ENCODE measurements at regions of chr1 and their contacts with region 1.

Region 1: DNA sequence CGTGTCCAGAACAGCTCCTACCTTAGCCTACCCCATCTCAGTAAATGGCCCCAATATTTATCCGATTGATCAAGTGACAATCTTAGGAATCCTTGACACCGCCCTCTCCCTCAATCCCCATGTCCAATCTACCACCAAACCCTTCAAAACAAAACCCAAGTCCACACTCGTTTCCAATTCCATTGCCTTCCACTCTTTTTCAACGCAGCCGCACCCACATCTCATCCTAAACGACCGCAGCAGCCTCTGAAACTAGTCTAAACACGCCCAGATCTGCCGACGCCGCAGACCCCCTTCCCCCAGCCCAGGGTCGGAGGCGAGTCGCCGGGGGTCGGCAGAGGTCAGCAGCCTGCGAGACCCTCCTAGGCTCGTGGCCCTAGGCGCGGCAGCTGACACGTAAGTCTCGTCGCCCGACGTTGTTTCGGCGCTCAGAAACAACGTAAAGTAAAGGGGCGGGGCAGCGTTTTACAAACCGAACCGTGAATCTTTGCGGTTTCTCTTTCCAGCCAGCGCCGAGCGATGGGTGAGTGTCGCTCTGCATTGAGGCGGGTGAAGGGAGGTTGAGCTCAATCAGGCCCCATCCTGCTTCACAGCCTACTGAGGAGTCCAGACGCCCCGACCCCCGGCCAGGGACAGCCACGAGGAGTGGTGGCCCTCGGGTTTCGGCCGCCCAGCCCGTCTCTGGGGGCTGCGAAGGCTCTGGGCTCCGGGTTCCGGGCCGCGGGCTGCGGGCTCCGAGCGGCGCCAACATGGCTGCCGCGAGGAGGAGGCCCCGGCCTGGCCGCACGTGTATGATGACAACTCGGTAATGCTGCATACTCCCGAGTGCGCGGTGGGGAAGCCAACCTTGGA is at the start of gene RPS8:
- DNase-seq: peak; percentile 85 to 99 (median 89)
- ATAC-seq: peak; percentile 81
- H3K4me3 ChIP-seq: peak within 1 kb of the TSS; percentile 75
- H3K27ac ChIP-seq: peak within 1 kb of the TSS; percentile 98
- H3K4me1 ChIP-seq: peaks cover 13 to 22% of the 10 kb centered on the region in 2 experiments
- H3K27me3 ChIP-seq: no peaks in the 10 kb centered on the region
- CTCF ChIP-seq: 0 out of 6 replicates have a peak, but pooled peaks of 1 of the 3 experiments have one; percentile 2
- EP300 ChIP-seq: peak; percentile 44; the same call in 1 of the 2 replicates
- POLR2A ChIP-seq: peak; percentile 100
- RAD21 ChIP-seq: no peak
- polyA plus RNA-seq, gene RPS8: 2,431 to 2,562 TPM

Region 2: DNA sequence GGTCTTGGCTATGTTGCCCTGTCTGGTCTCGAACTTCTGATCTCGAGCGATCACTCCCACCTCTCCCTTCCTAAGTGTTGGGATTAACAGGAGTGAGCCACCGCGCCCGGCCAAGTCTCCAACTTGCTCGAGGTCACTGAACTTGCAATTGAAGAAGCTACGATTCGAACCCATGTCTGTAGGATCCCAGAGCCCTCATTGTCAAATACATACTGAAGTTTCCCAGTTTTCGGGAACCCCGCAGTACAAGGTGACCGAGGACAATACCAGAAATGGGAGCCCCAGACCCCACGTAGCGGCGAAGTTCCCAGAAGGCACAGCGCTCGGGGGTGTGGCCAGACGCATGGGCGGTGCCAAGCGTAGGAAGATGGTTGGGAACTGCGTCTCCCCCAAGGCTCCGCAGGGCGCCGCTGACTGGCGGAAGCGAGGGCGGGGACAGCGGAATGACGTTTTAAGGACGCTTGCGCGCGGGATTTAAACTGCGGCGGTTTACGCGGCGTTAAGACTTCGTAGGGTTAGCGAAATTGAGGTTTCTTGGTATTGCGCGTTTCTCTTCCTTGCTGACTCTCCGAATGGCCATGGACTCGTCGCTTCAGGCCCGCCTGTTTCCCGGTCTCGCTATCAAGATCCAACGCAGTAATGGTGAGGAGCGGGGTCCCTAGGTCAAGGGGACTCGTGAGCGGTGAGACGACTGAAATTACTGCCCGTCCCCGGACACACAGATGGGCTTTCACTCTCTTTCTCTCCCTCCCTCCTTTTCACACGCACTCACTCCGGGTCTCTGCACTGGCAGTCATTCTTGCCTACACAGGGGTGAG is 35.7 kb before region 1 on chr1 and contains the start of gene KIF2C:
- CTCF ChIA-PET with region 1: no interaction called
- POLR2A ChIA-PET with region 1: interaction called, 26 read pairs
- in situ Hi-C with region 1: no loop called
- intact Hi-C with region 1: loop called (anchors 2 kb)
- DNase-seq: peak; percentile 97 to 100 (median 98)
- ATAC-seq: peak; percentile 98
- H3K4me3 ChIP-seq: peak within 1 kb of the TSS; percentile 68
- H3K27ac ChIP-seq: peak within 1 kb of the TSS; percentile 95
- H3K4me1 ChIP-seq: peaks cover 13 to 22% of the 10 kb centered on the region in 2 experiments; a peak in 4 of 5 replicates
- H3K27me3 ChIP-seq: no peaks in the 10 kb centered on the region
- CTCF ChIP-seq: peak in 2 of 3 experiments; percentile 15 to 25; a peak in 3 of 6 replicates
- EP300 ChIP-seq: peak; percentile 54
- POLR2A ChIP-seq: peak; percentile 98
- RAD21 ChIP-seq: no peak
- polyA plus RNA-seq, gene KIF2C: 84.9 to 161 TPM

Region 3: GRCh38 chr1:44757420-44757819 is 17.9 kb before region 1 on chr1:
- CTCF ChIA-PET with region 1: no interaction called
- POLR2A ChIA-PET with region 1: interaction called, 112 read pairs
- in situ Hi-C with region 1: no loop called
- intact Hi-C with region 1: no loop called
- DNase-seq: no peak
- ATAC-seq: no peak
- H3K4me3 ChIP-seq: no peak overlapping the region
- H3K27ac ChIP-seq: no peak overlapping the region
- H3K4me1 ChIP-seq: no peaks in the 10 kb centered on the region
- H3K27me3 ChIP-seq: no peaks in the 10 kb centered on the region
- CTCF ChIP-seq: no peak
- EP300 ChIP-seq: no peak
- POLR2A ChIP-seq: no peak
- RAD21 ChIP-seq: no peak

Region 4: DNA sequence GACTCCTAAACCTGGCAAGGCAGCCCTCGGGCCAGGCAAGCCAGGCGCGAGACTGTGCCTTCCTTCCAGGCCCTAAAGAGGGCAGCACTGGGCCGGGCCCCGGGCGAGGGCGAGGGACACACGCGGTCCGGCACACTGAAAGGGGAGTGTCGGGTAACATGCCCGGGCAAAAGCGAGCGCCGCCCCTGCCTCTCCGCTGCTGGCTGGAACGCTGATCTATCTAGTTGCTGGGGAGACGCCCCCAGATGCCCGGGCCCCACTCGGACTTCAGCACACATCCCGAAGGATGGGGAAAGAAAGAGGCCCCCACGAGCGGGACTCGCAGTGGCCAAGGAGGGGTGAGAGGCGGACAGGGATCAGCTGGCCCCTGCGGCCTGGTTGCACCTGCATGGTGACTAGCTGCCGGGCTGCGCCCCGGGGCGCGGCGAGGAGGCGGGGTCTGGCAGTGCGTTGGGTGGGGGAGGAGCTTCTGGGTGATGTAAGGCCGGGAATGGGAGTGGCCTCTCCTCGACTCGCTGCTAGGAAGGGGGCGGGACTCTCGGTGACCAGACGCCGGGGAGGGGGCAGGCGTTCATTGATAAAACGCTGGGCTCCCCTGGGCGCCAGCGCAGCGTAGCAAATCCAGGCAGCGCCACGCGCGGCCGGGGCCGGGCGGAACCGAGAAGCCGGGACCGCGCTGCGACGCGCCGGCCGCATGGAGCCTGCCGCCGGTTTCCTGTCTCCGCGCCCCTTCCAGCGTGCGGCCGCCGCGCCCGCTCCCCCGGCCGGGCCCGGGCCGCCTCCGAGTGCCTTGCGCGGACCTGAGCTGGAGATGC is 24.7 kb after region 1 on chr1 and contains the start of gene PLK3:
- CTCF ChIA-PET with region 1: no interaction called
- POLR2A ChIA-PET with region 1: interaction called, 12 read pairs
- in situ Hi-C with region 1: no loop called
- intact Hi-C with region 1: no loop called
- DNase-seq: peak; percentile 92 to 99 (median 96)
- ATAC-seq: peak; percentile 93
- H3K4me3 ChIP-seq: peak within 1 kb of the TSS; percentile 77
- H3K27ac ChIP-seq: peak within 1 kb of the TSS; percentile 69
- H3K4me1 ChIP-seq: peaks cover 23 to 53% of the 10 kb centered on the region in 2 experiments
- H3K27me3 ChIP-seq: no peaks in the 10 kb centered on the region; a peak in 1 of 5 replicates
- CTCF ChIP-seq: peak; percentile 94 to 96 (median 95)
- EP300 ChIP-seq: no peak; the same call in 1 of the 2 replicates
- POLR2A ChIP-seq: peak; percentile 91
- RAD21 ChIP-seq: peak; percentile 91 to 96
- polyA plus RNA-seq, gene PLK3: 0.52 to 1.9 TPM

Region 5: GRCh38 chr1:45172024-45172423 is 396.7 kb after region 1 on chr1:
- CTCF ChIA-PET with region 1: no interaction called
- POLR2A ChIA-PET with region 1: no interaction called
- in situ Hi-C with region 1: no loop called
- intact Hi-C with region 1: no loop called
- DNase-seq: peak in 1 of 4 experiments; percentile 20
- ATAC-seq: no peak
- H3K4me3 ChIP-seq: no peak overlapping the region
- H3K27ac ChIP-seq: no peak overlapping the region
- H3K4me1 ChIP-seq: no peaks in the 10 kb centered on the region; a peak in 1 of 5 replicates
- H3K27me3 ChIP-seq: peaks cover 2 to 4% of the 10 kb centered on the region in 2 experiments; a peak in 2 of 5 replicates
- CTCF ChIP-seq: no peak
- EP300 ChIP-seq: no peak
- POLR2A ChIP-seq: no peak
- RAD21 ChIP-seq: no peak

Region 6: GRCh38 chr1:45339789-45340570 is 564.7 kb after region 1 on chr1 and contains the starts of genes MUTYH and TOE1:
- CTCF ChIA-PET with region 1: no interaction called
- POLR2A ChIA-PET with region 1: interaction called, 10 read pairs
- in situ Hi-C with region 1: no loop called
- intact Hi-C with region 1: no loop called
- DNase-seq: peak; percentile 98 to 99 (median 98)
- ATAC-seq: peak; percentile 95
- H3K4me3 ChIP-seq: peak within 1 kb of the TSS; percentile 66
- H3K27ac ChIP-seq: peak within 1 kb of the TSS; percentile 94
- H3K4me1 ChIP-seq: peaks cover 6 to 18% of the 10 kb centered on the region in 2 experiments; a peak in 4 of 5 replicates
- H3K27me3 ChIP-seq: no peaks in the 10 kb centered on the region
- CTCF ChIP-seq: no peak
- EP300 ChIP-seq: no peak; the same call in 1 of the 2 replicates
- POLR2A ChIP-seq: peak; percentile 99
- RAD21 ChIP-seq: no peak; a peak in 1 of 4 replicates
- polyA plus RNA-seq, gene MUTYH: 3.4 to 6.2 TPM
- polyA plus RNA-seq, gene TOE1: 59.8 to 85.7 TPM

Measured in K562 (cell line).